ENCODE measurements at regions of chr11 and their contacts with region 1.

Region 1: GRCh38 chr11:60887556-60887955 is 18.8 kb downstream of the PRPF19 start:
- DNase-seq: no peak
- H3K4me3 ChIP-seq: no peak overlapping the region
- H3K27ac ChIP-seq: no peak overlapping the region
- H3K27me3 ChIP-seq: no peaks in the 10 kb centered on the region
- CTCF ChIP-seq: peak; percentile 80

Region 2: GRCh38 chr11:60775420-60775961 is 112.1 kb before region 1 on chr11:
- CTCF ChIA-PET with region 1: interaction called, 64 read pairs
- POLR2A ChIA-PET with region 1: no interaction called
- DNase-seq: peak; percentile 81
- H3K4me3 ChIP-seq: no peak overlapping the region
- H3K27ac ChIP-seq: no peak overlapping the region
- H3K27me3 ChIP-seq: peaks cover 3% of the 10 kb centered on the region
- CTCF ChIP-seq: peak; percentile 91

Region 3: DNA sequence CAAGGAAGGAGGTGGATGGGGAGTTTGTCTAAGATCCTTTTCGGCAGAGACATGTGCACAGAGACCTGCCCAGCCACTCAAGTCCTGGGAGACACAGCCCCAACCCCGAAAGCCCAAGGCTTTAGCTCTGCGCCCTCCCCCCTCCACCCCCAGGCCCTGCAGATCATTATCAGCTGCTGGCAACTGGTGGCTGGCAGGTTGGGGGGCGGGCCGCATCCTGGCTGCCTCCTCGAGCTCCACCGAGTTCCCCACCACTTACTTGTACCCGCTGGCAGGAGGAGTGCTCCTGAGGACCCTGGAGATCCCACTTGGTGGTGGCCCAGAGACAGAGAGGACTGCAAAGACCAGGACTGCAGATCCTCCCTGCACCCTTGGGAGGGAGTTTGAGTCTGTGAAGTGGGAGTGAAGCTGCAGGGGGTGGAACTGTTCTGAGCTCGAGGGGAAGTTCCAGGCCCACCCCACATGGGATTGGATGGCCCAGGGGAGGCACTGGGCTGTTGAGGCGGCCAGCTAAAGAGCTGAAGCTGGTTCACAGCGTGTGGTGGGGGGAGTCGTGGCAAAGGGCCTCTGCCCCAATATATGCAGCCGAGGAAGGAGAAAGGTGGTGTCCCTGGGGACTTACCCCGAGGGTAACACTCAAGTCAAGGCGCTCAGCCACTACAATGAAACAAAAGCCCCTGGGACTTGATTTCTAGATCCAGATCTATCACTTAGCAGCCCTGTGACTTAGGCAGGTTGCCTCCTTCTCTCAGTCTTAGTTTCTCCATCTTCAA is 65.5 kb before region 1 on chr11:
- CTCF ChIA-PET with region 1: interaction called, 295 read pairs
- POLR2A ChIA-PET with region 1: no interaction called
- DNase-seq: no peak
- H3K4me3 ChIP-seq: no peak overlapping the region
- H3K27ac ChIP-seq: no peak overlapping the region
- H3K27me3 ChIP-seq: peaks cover 19% of the 10 kb centered on the region
- CTCF ChIP-seq: no peak

Region 4: GRCh38 chr11:60841797-60842667 is 45.5 kb before region 1 on chr11 and contains the start of gene CCDC86:
- CTCF ChIA-PET with region 1: interaction called, 14 read pairs
- POLR2A ChIA-PET with region 1: no interaction called
- DNase-seq: peak; percentile 91
- H3K4me3 ChIP-seq: peak within 1 kb of the TSS; percentile 89
- H3K27ac ChIP-seq: peak within 1 kb of the TSS; percentile 66
- H3K27me3 ChIP-seq: peaks cover 10% of the 10 kb centered on the region
- CTCF ChIP-seq: no peak
- polyA plus RNA-seq, gene CCDC86: 15.2 and 17.9 TPM in 2 replicates

Region 5: DNA sequence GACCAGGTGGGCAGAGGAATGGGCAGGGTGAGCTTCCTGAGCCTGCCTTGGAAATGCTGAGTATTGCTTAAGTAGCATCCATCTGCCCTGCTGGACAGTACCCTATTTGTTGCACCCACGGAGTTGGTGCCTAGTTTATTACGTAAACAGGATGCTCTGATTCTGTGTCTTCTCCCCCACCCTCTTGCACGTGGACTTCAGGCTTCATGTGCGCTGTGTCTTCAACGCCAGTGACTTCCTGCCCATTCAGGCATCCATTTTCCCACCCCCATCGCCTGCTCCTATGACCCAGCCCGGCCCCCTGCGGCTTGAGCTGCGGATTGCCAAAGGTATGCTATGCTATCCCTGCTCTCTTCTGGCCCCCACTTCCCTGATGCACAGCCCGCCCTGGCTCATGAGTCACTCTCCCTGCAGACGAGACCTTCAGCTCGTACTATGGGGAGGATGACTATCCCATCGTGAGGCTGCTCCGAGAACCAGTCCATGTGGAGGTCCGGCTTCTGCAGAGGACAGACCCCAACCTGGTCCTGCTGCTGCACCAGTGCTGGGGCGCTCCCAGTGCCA is 14.5 kb before region 1 on chr11:
- CTCF ChIA-PET with region 1: interaction called, 17 read pairs
- POLR2A ChIA-PET with region 1: interaction called, 5 read pairs
- DNase-seq: peak; percentile 39
- H3K4me3 ChIP-seq: no peak overlapping the region
- H3K27ac ChIP-seq: peak overlapping the region; percentile 70
- H3K27me3 ChIP-seq: peaks cover 2% of the 10 kb centered on the region
- CTCF ChIP-seq: no peak

Region 6: DNA sequence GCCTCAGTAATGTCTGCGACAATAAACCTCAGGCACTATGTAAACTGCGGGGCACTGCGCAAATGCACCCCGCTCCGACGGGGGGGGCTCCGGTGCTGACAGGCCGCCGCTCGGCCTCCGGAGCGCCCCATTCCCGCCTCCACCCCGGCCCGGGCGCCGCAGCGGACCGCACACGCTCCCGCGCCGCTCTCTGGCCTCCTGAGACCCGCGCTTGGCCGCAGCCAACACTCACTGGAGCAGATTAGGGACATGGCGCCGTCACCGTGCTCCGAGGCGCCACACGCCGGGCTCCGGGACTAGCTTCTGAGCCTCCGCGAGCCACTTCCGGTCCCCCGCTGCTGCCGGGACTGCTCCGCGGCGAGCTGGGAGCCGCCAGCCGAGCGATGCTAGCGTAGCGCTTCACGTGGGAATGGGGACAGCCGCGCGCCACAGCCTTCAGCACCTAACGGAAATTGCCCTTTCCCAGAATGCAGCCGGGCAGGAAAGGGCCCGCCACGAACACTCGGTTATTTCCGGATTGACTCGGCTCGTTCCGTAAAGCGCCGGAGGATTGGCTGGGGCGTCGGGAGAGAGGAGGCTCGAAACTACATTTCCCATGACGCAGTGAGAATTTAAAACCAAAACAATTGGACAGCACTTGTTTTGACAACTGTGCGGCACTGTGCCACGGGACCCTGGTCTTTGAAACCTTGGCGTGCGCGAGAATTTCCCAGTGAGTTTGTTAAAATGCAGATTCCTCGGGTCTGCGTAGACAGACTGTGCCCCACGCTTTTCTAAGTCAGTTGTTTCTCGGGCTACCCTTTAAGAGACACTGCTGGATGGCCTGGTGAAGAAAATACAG is 18.8 kb after region 1 on chr11 and contains the start of gene PRPF19:
- CTCF ChIA-PET with region 1: interaction called, 14 read pairs
- POLR2A ChIA-PET with region 1: interaction called, 4 read pairs
- DNase-seq: peak; percentile 81
- H3K4me3 ChIP-seq: peak within 1 kb of the TSS; percentile 91
- H3K27ac ChIP-seq: peak within 1 kb of the TSS; percentile 85
- H3K27me3 ChIP-seq: peaks cover 5% of the 10 kb centered on the region
- CTCF ChIP-seq: no peak
- polyA plus RNA-seq, gene PRPF19: 25.1 and 33.6 TPM in 2 replicates

Measured in AG04450 (cell line).